Lower lobe of right lung (tissue), 2 donors: ENCODE measurements at regions of chr1 and their contacts with region 1.

Region 1: GRCh38 chr1:5067246-5067645 is 412.8 kb downstream of the AJAP1 start:
- DNase-seq: no peak
- ATAC-seq: no peak
- H3K4me3 ChIP-seq: no peak overlapping the region
- H3K27ac ChIP-seq: no peak overlapping the region
- H3K4me1 ChIP-seq: no peaks in the 10 kb centered on the region
- H3K27me3 ChIP-seq: no peaks in the 10 kb centered on the region
- CTCF ChIP-seq: no peak

Region 2: GRCh38 chr1:5009376-5010065 is 57.7 kb before region 1 on chr1:
- intact Hi-C with region 1: loop called (anchors 10 kb)
- DNase-seq: no peak
- ATAC-seq: no peak
- H3K4me3 ChIP-seq: no peak overlapping the region
- H3K27ac ChIP-seq: no peak overlapping the region
- H3K4me1 ChIP-seq: no peaks in the 10 kb centered on the region
- H3K27me3 ChIP-seq: peaks cover 15% of the 10 kb centered on the region
- CTCF ChIP-seq: no peak